Tibial artery (tissue), 4 donors: ENCODE measurements at regions of chr15 and their contacts with region 1.

Region 1: GRCh38 chr15:74011610-74012009 is 17.1 kb downstream of the PML start:
- DNase-seq: peak in 1 of 2 donors; percentile 68
- H3K4me3 ChIP-seq: no peak overlapping the region
- H3K27ac ChIP-seq: peak overlapping the region in 1 of 2 donors; percentile 15
- H3K4me1 ChIP-seq: peaks cover 0 to 40% (median 28%) of the 10 kb centered on the region in 4 donors
- H3K27me3 ChIP-seq: no peaks in the 10 kb centered on the region
- CTCF ChIP-seq: no peak

Region 2: GRCh38 chr15:74035121-74036017 is 23.8 kb after region 1 on chr15:
- intact Hi-C with region 1: loop called (anchors 2 kb)
- DNase-seq: no peak
- H3K4me3 ChIP-seq: no peak overlapping the region
- H3K27ac ChIP-seq: no peak overlapping the region
- H3K4me1 ChIP-seq: peaks cover 2 to 21% (median 11%) of the 10 kb centered on the region in 4 donors
- H3K27me3 ChIP-seq: no peaks in the 10 kb centered on the region
- CTCF ChIP-seq: no peak